ENCODE measurements at regions of chr6 and their contacts with region 1.

Region 1: DNA sequence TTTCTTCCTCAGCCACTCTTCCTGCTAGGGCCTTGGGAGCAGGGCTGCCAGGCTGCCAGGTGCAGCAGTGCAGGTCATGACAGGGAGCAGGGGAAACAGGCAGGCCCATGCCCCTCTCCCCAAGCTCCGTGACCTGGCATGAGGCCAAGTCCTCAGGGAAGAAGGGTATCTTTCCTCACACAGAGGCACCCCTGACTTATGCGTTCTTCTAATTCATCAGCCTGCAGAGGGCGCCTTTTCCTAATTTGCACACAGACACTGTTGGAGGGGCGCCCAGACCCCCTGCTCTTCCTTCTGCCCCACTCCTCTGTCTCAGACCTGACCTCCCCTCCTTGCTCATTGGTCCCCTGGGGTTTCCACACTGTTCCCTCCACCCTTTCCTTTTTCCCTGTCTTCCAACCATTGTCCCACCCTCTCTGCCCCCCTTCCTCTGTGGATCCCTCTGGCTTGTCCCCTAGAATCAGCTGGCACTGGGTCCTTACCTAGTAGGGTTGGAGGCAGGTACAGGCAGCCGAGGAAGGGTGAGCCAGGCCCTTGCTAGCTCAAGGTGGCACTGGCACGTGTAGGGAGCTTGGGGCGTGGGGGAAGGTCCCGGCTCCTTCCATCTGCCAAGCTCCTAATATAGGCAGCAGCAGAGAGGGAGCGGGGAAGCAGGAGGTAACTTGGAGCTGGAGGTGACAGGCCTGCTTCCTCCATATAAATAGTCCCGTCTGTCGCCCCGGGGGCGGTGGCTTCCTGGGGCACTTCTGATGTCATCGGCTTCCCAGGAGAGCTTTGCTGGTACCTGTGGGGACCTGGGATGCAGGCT is 154.9 kb upstream of the MLN start:
- DNase-seq: peak in 1 of 2 experiments; percentile 82
- H3K4me3 ChIP-seq: no peak overlapping the region
- H3K27ac ChIP-seq: no peak overlapping the region
- H3K4me1 ChIP-seq: peaks cover 8 to 12% (median 10%) of the 10 kb centered on the region in 4 experiments
- H3K27me3 ChIP-seq: no peaks in the 10 kb centered on the region; a peak in 1 of 7 replicates
- CTCF ChIP-seq: peak in 2 of 3 experiments; percentile 70 to 79; a peak in 3 of 4 replicates
- EP300 ChIP-seq: no peak
- POLR2A ChIP-seq: no peak
- RAD21 ChIP-seq: peak; percentile 56 to 72

Region 2: GRCh38 chr6:33851959-33852358 is 106.8 kb before region 1 on chr6:
- CTCF ChIA-PET with region 1: interaction called, 46 read pairs
- POLR2A ChIA-PET with region 1: no interaction called
- DNase-seq: peak; percentile 66 to 71
- H3K4me3 ChIP-seq: no peak overlapping the region
- H3K27ac ChIP-seq: no peak overlapping the region
- H3K4me1 ChIP-seq: peaks cover 0 to 5% (median 2%) of the 10 kb centered on the region in 4 experiments; a peak in 4 of 7 replicates
- H3K27me3 ChIP-seq: no peaks in the 10 kb centered on the region
- CTCF ChIP-seq: peak in 2 of 3 experiments; percentile 84 to 93; a peak in 3 of 4 replicates
- EP300 ChIP-seq: no peak
- POLR2A ChIP-seq: no peak
- RAD21 ChIP-seq: peak; percentile 88 to 96

Region 3: DNA sequence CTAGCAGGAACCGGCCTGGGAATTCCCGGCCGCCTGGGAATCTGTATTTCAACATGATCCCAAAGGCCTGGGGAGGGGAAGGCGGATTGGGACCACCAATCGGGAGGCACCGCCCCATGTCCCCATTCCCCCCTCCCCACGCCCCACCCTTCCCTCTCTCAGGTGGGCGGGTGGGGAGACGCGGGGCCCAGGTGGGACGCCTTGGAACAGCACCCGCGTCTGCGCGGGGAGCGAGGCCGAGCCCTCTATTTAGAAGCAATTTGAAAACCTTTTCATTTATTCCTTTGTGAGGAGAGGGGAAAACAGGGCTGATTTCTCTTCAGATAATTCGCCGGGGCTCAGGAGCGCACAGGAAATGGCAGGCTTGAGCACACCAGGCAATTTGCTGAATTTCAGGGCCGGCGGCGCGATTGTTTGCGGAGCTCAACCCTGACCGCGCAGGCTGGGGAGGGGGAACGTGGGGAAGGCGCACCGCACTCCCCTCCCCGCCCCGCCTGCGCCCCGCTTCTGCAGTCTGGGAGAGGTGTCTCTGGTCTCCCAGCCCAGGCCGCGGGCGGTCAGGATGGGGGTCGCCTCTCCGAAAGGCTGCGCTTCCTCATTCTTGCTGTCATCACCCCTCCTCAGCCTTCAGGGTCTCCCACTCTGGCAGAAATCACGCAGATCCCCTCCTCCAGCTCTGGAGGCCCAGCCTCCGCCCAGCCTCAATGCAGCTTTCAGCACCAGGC is 17.1 kb after region 1 on chr6:
- CTCF ChIA-PET with region 1: interaction called, 98 read pairs
- POLR2A ChIA-PET with region 1: no interaction called
- DNase-seq: peak in 1 of 2 experiments; percentile 70
- H3K4me3 ChIP-seq: peak overlapping the region; percentile 35 to 63 (median 52)
- H3K27ac ChIP-seq: no peak overlapping the region
- H3K4me1 ChIP-seq: peaks cover 2 to 12% (median 3%) of the 10 kb centered on the region in 4 experiments; a peak in 5 of 7 replicates
- H3K27me3 ChIP-seq: peaks cover 5 to 14% (median 11%) of the 10 kb centered on the region in 4 experiments
- CTCF ChIP-seq: no peak
- EP300 ChIP-seq: no peak
- POLR2A ChIP-seq: no peak
- RAD21 ChIP-seq: no peak

Region 4: DNA sequence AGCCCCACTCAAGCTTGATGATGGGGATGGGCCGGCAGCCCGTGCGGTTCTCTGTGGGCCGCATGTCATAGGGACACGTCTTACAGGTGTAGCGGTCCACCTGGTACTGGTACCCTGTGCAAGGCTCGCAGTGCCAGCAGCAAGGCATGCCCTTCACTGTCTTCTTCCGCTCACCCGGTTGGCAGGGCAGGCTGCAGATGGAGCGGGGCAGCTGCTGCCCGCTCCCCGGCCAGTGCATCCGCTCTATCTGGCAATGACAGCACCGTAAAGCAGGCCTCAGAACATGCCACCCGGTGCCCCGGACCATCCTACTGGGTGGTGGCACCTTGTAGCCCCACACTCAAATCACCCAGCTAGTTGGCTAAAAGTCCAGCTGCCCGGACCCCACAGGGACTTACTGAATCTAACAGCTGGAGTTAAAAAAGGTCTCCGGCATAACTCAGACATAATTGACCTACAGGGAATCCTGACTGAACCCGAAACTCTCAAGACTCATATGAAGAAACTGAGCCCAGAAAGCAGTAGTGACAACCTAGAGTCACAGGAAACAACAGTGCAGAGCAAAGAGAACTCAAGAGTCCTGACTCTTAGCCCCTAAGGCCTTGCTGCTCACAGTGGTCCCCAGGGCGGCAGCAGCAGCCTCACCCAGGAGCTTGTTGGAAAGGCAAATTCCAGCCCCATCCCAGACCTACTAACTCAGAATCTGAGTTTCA is 77.8 kb after region 1 on chr6:
- CTCF ChIA-PET with region 1: interaction called, 19 read pairs
- POLR2A ChIA-PET with region 1: no interaction called
- DNase-seq: no peak
- H3K4me3 ChIP-seq: no peak overlapping the region
- H3K27ac ChIP-seq: no peak overlapping the region
- H3K4me1 ChIP-seq: peaks cover 0 to 6% (median 0%) of the 10 kb centered on the region in 4 experiments; a peak in 1 of 7 replicates
- H3K27me3 ChIP-seq: no peaks in the 10 kb centered on the region
- CTCF ChIP-seq: no peak
- EP300 ChIP-seq: no peak
- POLR2A ChIP-seq: no peak
- RAD21 ChIP-seq: no peak

Region 5: DNA sequence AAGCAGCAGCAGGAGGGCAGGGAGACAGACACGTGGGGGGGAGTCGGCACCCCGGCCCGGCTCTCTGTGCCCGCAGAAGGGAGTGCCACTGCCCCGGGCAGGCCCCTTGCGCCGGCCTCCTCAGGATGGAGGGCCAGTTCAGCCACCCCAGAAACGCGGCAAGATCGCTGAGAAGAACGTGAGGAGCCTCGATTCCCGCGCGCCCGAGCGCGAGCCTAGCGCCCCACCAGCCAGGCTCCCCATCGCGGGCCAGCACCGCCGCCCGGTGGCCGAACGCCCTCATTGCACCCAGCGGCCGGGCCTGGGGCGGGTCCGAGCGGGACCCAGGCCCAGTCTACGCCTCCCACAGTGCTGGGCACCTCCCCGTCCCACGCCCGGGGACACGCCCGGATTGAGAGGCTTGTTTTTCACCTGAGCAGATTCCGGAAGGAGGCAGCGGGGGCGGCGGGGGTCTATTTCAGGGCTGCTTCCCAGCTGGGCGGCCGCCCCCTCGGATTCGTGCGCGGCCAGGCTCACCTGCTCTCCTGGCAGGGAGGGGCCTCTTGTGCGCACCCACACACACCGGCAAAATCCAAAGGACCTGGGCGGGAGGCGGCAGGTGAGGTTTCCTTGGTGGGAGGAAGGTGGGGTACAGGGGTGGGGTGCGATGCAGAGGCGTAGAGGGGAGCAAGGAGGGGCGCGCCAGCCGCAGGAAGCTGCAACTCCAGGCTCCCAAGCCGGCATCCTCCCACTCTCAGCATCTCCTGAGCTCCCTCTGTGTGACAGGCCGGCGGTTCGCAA is 196.1 kb after region 1 on chr6:
- CTCF ChIA-PET with region 1: interaction called, 21 read pairs
- POLR2A ChIA-PET with region 1: no interaction called
- DNase-seq: peak in 1 of 2 experiments; percentile 99
- H3K4me3 ChIP-seq: peak overlapping the region; percentile 3 to 72 (median 48)
- H3K27ac ChIP-seq: no peak overlapping the region
- H3K4me1 ChIP-seq: peaks cover 3 to 30% (median 10%) of the 10 kb centered on the region in 4 experiments
- H3K27me3 ChIP-seq: peaks cover 8 to 41% (median 26%) of the 10 kb centered on the region in 4 experiments
- CTCF ChIP-seq: peak in 2 of 3 experiments; percentile 93 to 98; a peak in 3 of 4 replicates
- EP300 ChIP-seq: no peak
- POLR2A ChIP-seq: no peak
- RAD21 ChIP-seq: peak; percentile 98 to 99

Measured in H1 (cell line).